GM12878 (cell line): ENCODE measurements at regions of chr6 and their contacts with region 1.

Region 1: DNA sequence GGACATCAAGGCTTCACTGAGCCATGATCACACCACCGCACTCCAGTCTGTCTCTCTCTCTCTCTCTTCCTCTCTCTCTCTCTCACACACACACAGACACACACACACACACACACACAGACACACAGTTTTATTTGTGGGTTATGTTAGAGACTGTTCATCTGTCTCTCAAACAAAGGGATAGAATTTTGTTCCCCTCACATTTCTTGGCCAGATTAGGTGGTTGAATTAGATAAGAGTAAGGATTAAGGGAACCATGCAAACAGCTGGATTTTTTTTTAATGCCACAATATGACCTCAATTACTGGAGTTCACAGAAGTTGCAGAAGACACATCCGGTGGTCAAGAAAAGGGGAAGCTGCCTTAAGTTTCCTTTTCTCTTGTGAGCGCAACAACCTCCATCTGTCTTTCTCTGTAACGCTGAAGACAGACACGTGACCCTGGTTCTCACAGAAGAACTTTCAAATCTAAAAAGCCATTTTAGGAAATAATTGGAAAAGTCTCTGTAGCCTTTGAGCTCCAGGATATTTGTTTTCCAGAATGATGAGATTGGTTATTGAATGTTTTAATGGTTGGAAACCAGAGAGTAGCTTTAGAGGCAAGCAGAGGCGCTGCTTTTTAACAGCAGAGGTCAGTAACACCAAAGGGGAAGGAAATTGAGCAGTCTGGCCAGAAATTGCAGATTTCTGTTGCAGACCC is 33.0 kb upstream of the LGSN start:
- DNase-seq: peak; percentile 88
- ATAC-seq: peak; percentile 94
- H3K4me3 ChIP-seq: peak overlapping the region; percentile 56
- H3K27ac ChIP-seq: peak overlapping the region; percentile 95
- H3K4me1 ChIP-seq: peaks cover 11% of the 10 kb centered on the region
- H3K27me3 ChIP-seq: no peaks in the 10 kb centered on the region
- CTCF ChIP-seq: peak; percentile 62 to 90 (median 82)
- EP300 ChIP-seq: peak; percentile 89 to 93
- POLR2A ChIP-seq: no peak
- RAD21 ChIP-seq: peak; percentile 98

Region 2: GRCh38 chr6:62891065-62891647 is 461.6 kb before region 1 on chr6:
- CTCF ChIA-PET with region 1: no interaction called
- POLR2A ChIA-PET with region 1: no interaction called
- RAD21 ChIA-PET with region 1: no interaction called
- SMC1A ChIA-PET with region 1: no interaction called
- in situ Hi-C with region 1: no loop called
- intact Hi-C with region 1: no loop called
- DNase-seq: no peak
- ATAC-seq: no peak
- H3K4me3 ChIP-seq: no peak overlapping the region
- H3K27ac ChIP-seq: no peak overlapping the region
- H3K4me1 ChIP-seq: no peaks in the 10 kb centered on the region
- H3K27me3 ChIP-seq: no peaks in the 10 kb centered on the region
- CTCF ChIP-seq: peak; percentile 22 to 36 (median 27); a peak in 3 of 6 replicates
- EP300 ChIP-seq: no peak
- POLR2A ChIP-seq: no peak
- RAD21 ChIP-seq: no peak

Region 3: GRCh38 chr6:63389191-63389844 is 36.6 kb after region 1 on chr6:
- CTCF ChIA-PET with region 1: interaction called, 26 read pairs
- POLR2A ChIA-PET with region 1: no interaction called
- RAD21 ChIA-PET with region 1: interaction called, 15 read pairs
- SMC1A ChIA-PET with region 1: interaction called, 23 read pairs
- in situ Hi-C with region 1: no loop called
- intact Hi-C with region 1: loop called (anchors 2 kb)
- DNase-seq: no peak
- ATAC-seq: peak; percentile 77
- H3K4me3 ChIP-seq: no peak overlapping the region
- H3K27ac ChIP-seq: peak overlapping the region; percentile 39; the same call in 1 of the 2 replicates
- H3K4me1 ChIP-seq: peaks cover 3% of the 10 kb centered on the region; the same call in 1 of the 2 replicates
- H3K27me3 ChIP-seq: no peaks in the 10 kb centered on the region
- CTCF ChIP-seq: no peak
- EP300 ChIP-seq: no peak
- POLR2A ChIP-seq: no peak
- RAD21 ChIP-seq: no peak

Region 4: GRCh38 chr6:63525186-63525878 is 172.6 kb after region 1 on chr6:
- CTCF ChIA-PET with region 1: interaction called, 9 read pairs
- POLR2A ChIA-PET with region 1: no interaction called
- RAD21 ChIA-PET with region 1: interaction called, 8 read pairs
- SMC1A ChIA-PET with region 1: interaction called, 27 read pairs
- in situ Hi-C with region 1: no loop called
- intact Hi-C with region 1: no loop called
- DNase-seq: no peak
- ATAC-seq: peak; percentile 40
- H3K4me3 ChIP-seq: no peak overlapping the region
- H3K27ac ChIP-seq: no peak overlapping the region
- H3K4me1 ChIP-seq: peaks cover 21% of the 10 kb centered on the region
- H3K27me3 ChIP-seq: no peaks in the 10 kb centered on the region
- CTCF ChIP-seq: 0 out of 6 replicates have a peak, but pooled peaks of 1 of the 3 experiments have one; percentile 4
- EP300 ChIP-seq: no peak
- POLR2A ChIP-seq: no peak
- RAD21 ChIP-seq: no peak

Region 5: GRCh38 chr6:63571881-63572732 is 219.4 kb after region 1 on chr6 and contains the starts of genes LOC128125822 and PTP4A1:
- CTCF ChIA-PET with region 1: interaction called, 52 read pairs
- POLR2A ChIA-PET with region 1: interaction called, 13 read pairs
- RAD21 ChIA-PET with region 1: interaction called, 69 read pairs
- SMC1A ChIA-PET with region 1: interaction called, 55 read pairs
- in situ Hi-C with region 1: loop called (anchors 5 kb)
- intact Hi-C with region 1: loop called (anchors 1 kb)
- DNase-seq: peak; percentile 81
- ATAC-seq: peak; percentile 91
- H3K4me3 ChIP-seq: peak within 1 kb of the TSS; percentile 80
- H3K27ac ChIP-seq: peak within 1 kb of the TSS; percentile 98
- H3K4me1 ChIP-seq: no peaks in the 10 kb centered on the region; the same call in 1 of the 2 replicates
- H3K27me3 ChIP-seq: no peaks in the 10 kb centered on the region
- CTCF ChIP-seq: no peak
- EP300 ChIP-seq: peak in 1 of 2 experiments; percentile 68; a peak in 2 of 4 replicates
- POLR2A ChIP-seq: peak; percentile 91
- RAD21 ChIP-seq: no peak
- polyA plus RNA-seq, gene PTP4A1: not detected

Region 6: DNA sequence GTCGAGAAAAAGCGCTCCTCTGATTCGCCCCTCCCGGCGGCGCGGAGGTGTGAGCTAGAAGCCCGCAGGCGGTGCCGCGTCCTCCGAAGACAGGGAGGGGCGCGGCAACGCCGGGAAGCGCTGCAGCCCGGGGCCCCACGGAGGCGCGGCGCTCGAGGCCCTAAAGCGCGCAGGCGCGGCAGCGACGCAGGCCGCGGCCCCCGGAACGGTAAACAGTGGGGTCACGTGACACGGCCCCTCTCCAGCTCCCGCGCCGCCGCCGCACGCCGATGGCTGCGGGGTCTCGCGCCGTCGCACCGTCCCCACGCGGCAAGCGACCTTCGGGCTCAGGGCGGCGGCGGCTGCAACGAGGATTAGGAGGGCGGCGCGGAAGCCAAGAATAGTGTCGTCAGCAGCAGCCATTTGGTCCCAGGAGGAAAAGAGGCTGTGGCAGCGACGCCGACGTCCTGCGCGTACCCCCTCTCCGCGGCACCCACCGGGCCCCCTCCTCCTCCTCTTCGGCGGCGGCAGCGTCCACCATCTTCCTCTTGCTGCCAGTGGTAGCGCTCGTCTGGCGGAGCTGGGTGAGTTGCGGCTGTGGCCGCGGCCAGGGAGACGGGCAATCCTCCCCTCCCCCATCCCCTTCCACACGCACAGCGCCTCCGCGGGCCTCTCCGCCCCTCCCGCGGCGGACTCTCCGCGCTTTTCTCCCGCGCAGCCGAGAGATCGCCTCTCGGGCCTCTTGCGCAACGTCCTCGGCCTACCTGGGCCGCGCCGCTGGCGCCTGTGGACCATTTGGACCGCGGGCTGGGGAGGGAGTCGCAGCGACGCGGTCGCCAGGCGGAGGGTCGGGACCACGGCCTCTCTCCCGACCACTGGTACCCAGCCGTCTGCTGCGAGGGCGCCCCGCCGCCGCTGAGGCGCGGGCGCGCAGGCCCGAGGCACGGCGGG is 283.1 kb after region 1 on chr6 and contains the start of gene PHF3:
- CTCF ChIA-PET with region 1: interaction called, 13 read pairs
- POLR2A ChIA-PET with region 1: interaction called, 3 read pairs
- RAD21 ChIA-PET with region 1: interaction called, 17 read pairs
- SMC1A ChIA-PET with region 1: interaction called, 9 read pairs
- in situ Hi-C with region 1: no loop called
- intact Hi-C with region 1: loop called (anchors 2 kb)
- DNase-seq: peak; percentile 56
- ATAC-seq: peak; percentile 88
- H3K4me3 ChIP-seq: peak within 1 kb of the TSS; percentile 78
- H3K27ac ChIP-seq: peak within 1 kb of the TSS; percentile 93
- H3K4me1 ChIP-seq: no peaks in the 10 kb centered on the region
- H3K27me3 ChIP-seq: no peaks in the 10 kb centered on the region
- CTCF ChIP-seq: peak in 1 of 3 experiments; percentile 9; a peak in 1 of 6 replicates
- EP300 ChIP-seq: no peak
- POLR2A ChIP-seq: peak; percentile 85
- RAD21 ChIP-seq: no peak
- polyA plus RNA-seq, gene PHF3: 8.3 to 9.5 TPM

Region 7: GRCh38 chr6:63802606-63803206 is 450.0 kb after region 1 on chr6:
- CTCF ChIA-PET with region 1: interaction called, 101 read pairs
- POLR2A ChIA-PET with region 1: interaction called, 4 read pairs
- RAD21 ChIA-PET with region 1: interaction called, 71 read pairs
- SMC1A ChIA-PET with region 1: interaction called, 56 read pairs
- in situ Hi-C with region 1: no loop called
- intact Hi-C with region 1: loop called (anchors 2 kb)
- DNase-seq: no peak
- ATAC-seq: peak; percentile 43; the same call in 1 of the 3 replicates
- H3K4me3 ChIP-seq: no peak overlapping the region
- H3K27ac ChIP-seq: no peak overlapping the region
- H3K4me1 ChIP-seq: no peaks in the 10 kb centered on the region
- H3K27me3 ChIP-seq: no peaks in the 10 kb centered on the region
- CTCF ChIP-seq: peak; percentile 54 to 64 (median 60); a peak in 5 of 6 replicates
- EP300 ChIP-seq: no peak
- POLR2A ChIP-seq: no peak
- RAD21 ChIP-seq: peak; percentile 89